ENCODE measurements at regions of chr10 and their contacts with region 1.

Region 1: DNA sequence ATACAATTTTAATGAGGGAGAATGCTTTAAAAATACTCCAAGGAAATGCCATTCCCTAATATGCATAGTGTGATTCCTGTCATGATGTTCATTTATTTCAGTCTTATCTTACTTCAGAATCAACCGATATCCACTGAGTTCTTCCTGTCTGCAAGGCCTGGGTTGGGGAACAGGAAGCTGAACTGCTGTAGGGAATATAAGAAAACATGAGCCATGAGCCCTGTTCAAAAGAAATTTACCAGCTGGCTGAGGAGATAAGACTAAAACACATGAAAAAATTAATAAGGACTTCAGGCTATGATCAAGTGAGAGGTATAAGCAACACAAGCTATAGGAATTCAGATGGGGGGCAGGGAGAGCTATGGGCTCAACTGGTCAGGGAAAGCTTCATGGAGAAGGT is 184.7 kb downstream of the PLPP4 start:
- DNase-seq: no peak

Region 2: GRCh38 chr10:120538091-120538490 is 103.6 kb before region 1 on chr10:
- intact Hi-C with region 1: no loop called
- DNase-seq: no peak

Region 3: GRCh38 chr10:120715171-120715570 is 73.5 kb after region 1 on chr10:
- intact Hi-C with region 1: no loop called
- DNase-seq: no peak

Region 4: DNA sequence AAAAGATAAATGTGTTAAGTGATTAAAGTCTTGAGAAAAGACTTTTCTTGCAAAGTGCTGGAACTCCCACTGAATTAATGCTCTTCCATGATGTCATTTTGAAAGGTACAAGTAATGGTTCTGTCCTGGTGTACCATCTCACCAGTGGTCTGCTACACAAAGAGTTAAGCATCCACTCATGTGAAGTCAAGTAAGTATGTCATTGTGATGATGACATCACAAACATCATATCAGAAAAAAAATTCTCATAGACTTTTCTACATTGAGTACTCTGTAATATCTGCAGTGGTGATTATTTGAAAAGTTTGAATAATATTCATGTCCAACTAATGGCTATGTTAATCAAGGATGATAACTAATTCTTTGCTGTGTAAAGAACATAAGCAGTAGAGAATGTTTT is 232.0 kb after region 1 on chr10:
- intact Hi-C with region 1: loop called in 1 of 2 experiments (anchors 5 kb)
- DNase-seq: no peak